H1 (cell line): ENCODE measurements at regions of chr9 and their contacts with region 1.

Region 1: DNA sequence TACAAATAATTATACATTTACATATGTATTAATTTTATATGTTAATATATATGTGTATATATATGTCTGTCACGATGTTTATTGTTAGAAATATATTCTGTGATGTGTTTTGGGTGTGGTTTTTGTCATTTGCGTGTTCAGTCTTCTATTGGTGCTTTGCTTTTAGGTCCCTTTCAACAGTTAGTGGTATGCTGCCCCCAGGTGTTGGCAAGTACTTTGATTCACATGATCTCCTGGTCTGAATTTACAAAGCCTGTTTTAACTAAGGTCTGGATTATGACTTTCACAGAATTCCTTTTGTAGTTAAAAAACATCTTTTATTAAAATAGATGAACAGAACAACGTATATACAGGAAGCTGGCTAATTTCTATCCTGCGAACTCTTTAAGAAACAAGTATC is 271.5 kb downstream of the CCDC171 start:
- DNase-seq: no peak
- H3K4me3 ChIP-seq: no peak overlapping the region
- H3K27ac ChIP-seq: no peak overlapping the region
- H3K4me1 ChIP-seq: no peaks in the 10 kb centered on the region
- H3K27me3 ChIP-seq: no peaks in the 10 kb centered on the region
- CTCF ChIP-seq: peak in 2 of 3 experiments; percentile 34 to 49; a peak in 2 of 4 replicates
- EP300 ChIP-seq: no peak
- POLR2A ChIP-seq: no peak
- RAD21 ChIP-seq: peak; percentile 62 to 63; a peak in 3 of 4 replicates

Region 2: GRCh38 chr9:15670884-15671283 is 153.4 kb before region 1 on chr9:
- CTCF ChIA-PET with region 1: no interaction called
- POLR2A ChIA-PET with region 1: no interaction called
- DNase-seq: no peak
- H3K4me3 ChIP-seq: no peak overlapping the region
- H3K27ac ChIP-seq: no peak overlapping the region
- H3K4me1 ChIP-seq: no peaks in the 10 kb centered on the region
- H3K27me3 ChIP-seq: no peaks in the 10 kb centered on the region
- CTCF ChIP-seq: no peak
- EP300 ChIP-seq: no peak
- POLR2A ChIP-seq: no peak
- RAD21 ChIP-seq: no peak

Region 3: GRCh38 chr9:15722888-15723287 is 101.4 kb before region 1 on chr9:
- CTCF ChIA-PET with region 1: no interaction called
- POLR2A ChIA-PET with region 1: no interaction called
- DNase-seq: no peak
- H3K4me3 ChIP-seq: no peak overlapping the region
- H3K27ac ChIP-seq: no peak overlapping the region
- H3K4me1 ChIP-seq: peaks cover 0 to 3% (median 2%) of the 10 kb centered on the region in 4 experiments; a peak in 3 of 7 replicates
- H3K27me3 ChIP-seq: no peaks in the 10 kb centered on the region
- CTCF ChIP-seq: no peak
- EP300 ChIP-seq: no peak
- POLR2A ChIP-seq: no peak
- RAD21 ChIP-seq: no peak

Region 4: DNA sequence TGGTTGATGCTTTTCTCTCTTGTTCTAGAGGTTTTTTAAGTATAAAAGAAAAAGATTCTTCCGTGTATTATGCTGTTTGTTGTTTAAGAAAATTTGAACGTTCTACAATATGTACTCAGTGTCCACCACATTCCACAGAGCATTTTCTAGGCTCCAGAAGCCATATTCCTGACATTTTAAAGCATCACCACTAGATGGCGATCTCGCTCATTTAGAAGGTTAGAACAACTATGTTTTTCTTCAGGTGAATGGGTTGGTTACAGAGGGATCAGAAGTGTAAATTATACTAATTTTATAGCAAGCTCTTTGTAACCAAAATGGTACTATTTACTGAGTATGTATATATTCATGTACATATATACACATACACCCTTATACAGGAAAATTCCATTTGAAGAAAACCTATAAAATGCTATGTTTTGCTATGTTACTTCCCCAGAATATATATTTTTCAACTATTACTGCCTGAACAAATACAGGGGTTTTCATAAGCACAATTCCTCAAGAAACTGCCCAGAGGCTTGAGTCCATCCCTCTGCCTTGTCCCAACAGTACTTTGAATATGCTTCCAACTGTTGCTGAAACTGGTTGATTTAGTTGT is 12.9 kb after region 1 on chr9:
- CTCF ChIA-PET with region 1: interaction called, 11 read pairs
- POLR2A ChIA-PET with region 1: no interaction called
- DNase-seq: no peak
- H3K4me3 ChIP-seq: no peak overlapping the region
- H3K27ac ChIP-seq: no peak overlapping the region
- H3K4me1 ChIP-seq: no peaks in the 10 kb centered on the region
- H3K27me3 ChIP-seq: no peaks in the 10 kb centered on the region
- CTCF ChIP-seq: peak in 2 of 3 experiments; percentile 50 to 73; a peak in 3 of 4 replicates
- EP300 ChIP-seq: no peak
- POLR2A ChIP-seq: no peak
- RAD21 ChIP-seq: peak; percentile 61 to 72

Region 5: GRCh38 chr9:16092142-16093091 is 268.1 kb after region 1 on chr9:
- CTCF ChIA-PET with region 1: no interaction called
- POLR2A ChIA-PET with region 1: no interaction called
- DNase-seq: no peak
- H3K4me3 ChIP-seq: no peak overlapping the region
- H3K27ac ChIP-seq: no peak overlapping the region
- H3K4me1 ChIP-seq: no peaks in the 10 kb centered on the region
- H3K27me3 ChIP-seq: no peaks in the 10 kb centered on the region
- CTCF ChIP-seq: no peak
- EP300 ChIP-seq: no peak
- POLR2A ChIP-seq: no peak
- RAD21 ChIP-seq: no peak